ENCODE measurements at regions of chr5 and their contacts with region 1.

Region 1: DNA sequence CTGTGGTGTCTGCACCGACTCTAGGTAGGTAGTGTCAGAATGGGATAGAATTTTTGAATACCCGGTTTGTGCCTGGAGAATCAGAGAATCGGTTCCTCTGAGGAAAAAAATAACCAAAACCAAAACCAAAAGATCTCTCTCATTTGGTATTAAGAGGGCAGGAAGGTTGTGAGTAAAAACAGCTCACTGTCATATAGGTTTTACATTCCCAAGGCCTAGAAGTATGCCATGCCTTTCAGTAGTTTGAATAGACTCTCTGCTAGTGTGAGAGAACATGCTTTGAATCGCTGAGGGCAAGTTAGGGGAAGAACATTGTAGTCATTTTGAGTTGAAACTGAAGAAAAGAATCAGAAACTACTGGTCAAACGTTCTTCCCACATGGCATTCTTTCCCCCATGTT is 411.4 kb upstream of the CD180 start:
- DNase-seq: no peak
- ATAC-seq: peak; percentile 68
- H3K4me3 ChIP-seq: no peak overlapping the region
- H3K27ac ChIP-seq: no peak overlapping the region
- H3K4me1 ChIP-seq: no peaks in the 10 kb centered on the region
- H3K27me3 ChIP-seq: no peaks in the 10 kb centered on the region
- CTCF ChIP-seq: no peak
- EP300 ChIP-seq: no peak
- POLR2A ChIP-seq: no peak
- RAD21 ChIP-seq: no peak

Region 2: DNA sequence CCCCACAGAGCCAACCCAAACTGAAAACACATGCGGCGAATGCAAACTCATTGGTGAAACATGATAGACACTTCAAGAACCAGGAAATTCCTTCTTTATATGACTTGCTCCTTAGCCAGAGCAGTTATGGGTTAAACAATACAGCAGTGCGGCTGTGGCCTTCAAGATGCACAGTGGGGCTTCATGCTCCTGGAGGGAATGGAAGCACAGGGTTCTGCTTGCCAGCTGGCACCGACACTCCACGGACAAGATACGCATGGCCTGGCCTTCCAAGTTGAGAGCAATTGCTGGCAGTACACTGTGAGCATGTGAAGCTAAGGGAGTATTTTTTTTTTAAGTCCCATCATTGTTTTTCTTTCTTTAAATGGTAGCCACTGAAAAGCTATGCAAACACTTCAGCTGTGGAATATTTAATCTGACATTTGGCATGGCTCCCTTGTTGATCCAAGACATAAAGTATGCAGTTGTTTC is 40.3 kb after region 1 on chr5:
- CTCF ChIA-PET with region 1: no interaction called
- POLR2A ChIA-PET with region 1: no interaction called
- RAD21 ChIA-PET with region 1: no interaction called
- SMC1A ChIA-PET with region 1: no interaction called
- in situ Hi-C with region 1: no loop called
- intact Hi-C with region 1: loop called (anchors 1 kb)
- DNase-seq: no peak
- ATAC-seq: no peak
- H3K4me3 ChIP-seq: no peak overlapping the region
- H3K27ac ChIP-seq: no peak overlapping the region
- H3K4me1 ChIP-seq: no peaks in the 10 kb centered on the region
- H3K27me3 ChIP-seq: no peaks in the 10 kb centered on the region
- CTCF ChIP-seq: no peak
- EP300 ChIP-seq: no peak
- POLR2A ChIP-seq: no peak
- RAD21 ChIP-seq: no peak